ENCODE measurements at regions of chr2 and their contacts with region 1.

Region 1: DNA sequence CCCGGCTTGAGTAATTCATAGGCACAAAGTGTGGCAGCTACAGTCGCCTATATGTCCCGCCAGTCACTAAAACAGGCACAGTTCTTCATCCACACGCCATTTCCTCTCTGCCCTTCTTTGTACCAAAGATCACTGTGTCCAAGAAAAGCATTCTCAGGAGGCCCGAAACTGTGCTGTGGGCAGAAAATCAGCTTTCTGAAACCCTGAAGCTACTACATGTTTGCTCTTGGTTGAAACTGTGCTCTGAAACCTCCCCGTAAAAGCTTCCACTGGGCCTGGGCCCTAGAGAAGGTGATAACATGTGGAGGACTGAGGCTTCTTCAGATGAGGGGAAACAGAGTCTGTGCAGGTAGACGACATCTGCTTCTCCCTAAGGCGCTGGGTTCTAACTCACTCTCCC is 75.6 kb upstream of the ID2 start:
- DNase-seq: no peak
- H3K4me3 Mint-ChIP-seq: no peak overlapping the region
- H3K27ac Mint-ChIP-seq: peak overlapping the region; percentile 53
- H3K4me1 Mint-ChIP-seq: peaks cover 55% of the 10 kb centered on the region
- H3K27me3 Mint-ChIP-seq: peaks cover 7% of the 10 kb centered on the region

Region 2: DNA sequence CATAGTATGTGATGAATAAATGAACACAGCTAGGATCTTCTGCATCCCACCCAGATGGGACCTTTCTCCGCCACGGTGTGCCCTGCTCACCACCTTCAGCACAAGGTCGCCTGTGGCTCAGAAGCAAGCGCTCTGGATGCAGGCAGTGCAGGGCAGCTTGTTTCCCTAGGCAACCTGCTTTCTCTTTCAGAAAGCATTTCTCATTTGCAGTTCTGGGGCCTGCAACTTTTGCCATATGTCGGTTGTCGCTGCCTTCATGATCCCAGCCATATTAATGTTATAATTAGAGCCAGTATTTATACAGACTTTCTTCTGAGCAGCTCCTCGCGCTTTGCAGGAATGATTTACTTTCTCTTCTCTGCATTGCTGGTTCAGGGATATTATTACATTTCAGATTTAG is 996.3 kb before region 1 on chr2:
- intact Hi-C with region 1: no loop called
- DNase-seq: no peak
- H3K4me3 Mint-ChIP-seq: no peak overlapping the region
- H3K27ac Mint-ChIP-seq: peak overlapping the region; percentile 37
- H3K4me1 Mint-ChIP-seq: peaks cover 47% of the 10 kb centered on the region
- H3K27me3 Mint-ChIP-seq: no peaks in the 10 kb centered on the region

Region 3: GRCh38 chr2:8049851-8050571 is 556.2 kb before region 1 on chr2:
- intact Hi-C with region 1: loop called (anchors 2 kb)
- DNase-seq: peak; percentile 63
- H3K4me3 Mint-ChIP-seq: peak overlapping the region; percentile 30
- H3K27ac Mint-ChIP-seq: peak overlapping the region; percentile 86
- H3K4me1 Mint-ChIP-seq: peaks cover 53% of the 10 kb centered on the region
- H3K27me3 Mint-ChIP-seq: no peaks in the 10 kb centered on the region

Region 4: DNA sequence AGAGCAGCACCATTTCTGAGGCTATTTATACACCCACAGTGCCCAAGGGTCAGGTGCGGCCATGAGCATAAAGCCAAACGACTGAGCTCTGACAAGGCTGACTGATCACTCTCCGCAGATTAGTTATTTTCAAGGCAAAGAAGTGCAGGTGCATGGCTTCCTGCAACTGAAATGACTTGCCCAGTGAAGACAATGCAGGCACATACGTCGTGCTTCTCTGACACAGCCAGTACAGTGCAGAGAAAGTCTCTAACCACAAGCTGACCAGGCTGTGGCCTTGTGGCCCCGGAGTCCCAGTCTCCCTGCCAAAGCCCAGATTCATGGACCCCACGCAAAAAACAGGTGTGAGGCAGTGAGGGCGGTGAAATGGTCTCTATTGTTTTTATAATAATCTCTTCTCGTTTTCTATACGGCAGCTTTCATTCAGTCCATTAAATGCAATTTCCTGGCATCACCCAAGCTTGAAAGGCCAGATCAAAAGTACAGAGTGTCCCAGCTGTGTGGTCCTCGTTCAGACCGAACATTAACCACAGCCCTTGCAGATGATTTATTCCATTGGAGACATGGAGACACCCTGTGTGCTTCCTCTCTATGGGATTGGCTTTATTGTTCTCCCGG is 371.4 kb before region 1 on chr2:
- intact Hi-C with region 1: loop called (anchors 10 kb)
- DNase-seq: no peak
- H3K4me3 Mint-ChIP-seq: no peak overlapping the region
- H3K27ac Mint-ChIP-seq: no peak overlapping the region
- H3K4me1 Mint-ChIP-seq: peaks cover 34% of the 10 kb centered on the region
- H3K27me3 Mint-ChIP-seq: peaks cover 4% of the 10 kb centered on the region

Region 5: DNA sequence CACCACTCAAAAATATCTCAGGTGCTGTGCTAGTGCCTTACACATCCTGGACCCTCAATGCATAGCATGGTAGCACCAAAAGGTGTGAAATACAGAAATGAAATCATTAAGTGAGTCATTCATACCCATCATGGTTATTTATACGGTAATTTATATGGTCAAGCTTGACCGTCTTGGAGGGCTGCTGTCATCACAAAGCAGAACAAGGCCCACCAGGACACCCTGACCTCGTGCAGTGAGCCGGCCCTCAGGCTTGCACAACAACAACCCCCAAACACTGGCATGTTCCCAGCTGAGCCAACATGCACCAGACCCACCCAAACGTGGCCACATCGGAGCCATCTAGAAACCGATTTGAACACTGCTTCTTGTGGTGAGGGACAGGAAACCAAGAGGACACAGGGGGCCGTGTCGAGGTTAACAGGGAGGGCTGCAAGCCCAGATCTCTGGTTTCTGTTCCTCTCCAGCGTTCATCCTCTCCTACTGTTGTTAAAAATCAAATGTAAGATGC is 302.8 kb before region 1 on chr2:
- intact Hi-C with region 1: loop called (anchors 5 kb)
- DNase-seq: peak; percentile 82
- H3K4me3 Mint-ChIP-seq: peak overlapping the region; percentile 49
- H3K27ac Mint-ChIP-seq: peak overlapping the region; percentile 47
- H3K4me1 Mint-ChIP-seq: peaks cover 81% of the 10 kb centered on the region
- H3K27me3 Mint-ChIP-seq: no peaks in the 10 kb centered on the region

Region 6: GRCh38 chr2:8488001-8488738 is 118.1 kb before region 1 on chr2:
- intact Hi-C with region 1: loop called (anchors 5 kb)
- DNase-seq: no peak
- H3K4me3 Mint-ChIP-seq: peak overlapping the region; percentile 6
- H3K27ac Mint-ChIP-seq: peak overlapping the region; percentile 2
- H3K4me1 Mint-ChIP-seq: peaks cover 40% of the 10 kb centered on the region
- H3K27me3 Mint-ChIP-seq: peaks cover 6% of the 10 kb centered on the region

Region 7: DNA sequence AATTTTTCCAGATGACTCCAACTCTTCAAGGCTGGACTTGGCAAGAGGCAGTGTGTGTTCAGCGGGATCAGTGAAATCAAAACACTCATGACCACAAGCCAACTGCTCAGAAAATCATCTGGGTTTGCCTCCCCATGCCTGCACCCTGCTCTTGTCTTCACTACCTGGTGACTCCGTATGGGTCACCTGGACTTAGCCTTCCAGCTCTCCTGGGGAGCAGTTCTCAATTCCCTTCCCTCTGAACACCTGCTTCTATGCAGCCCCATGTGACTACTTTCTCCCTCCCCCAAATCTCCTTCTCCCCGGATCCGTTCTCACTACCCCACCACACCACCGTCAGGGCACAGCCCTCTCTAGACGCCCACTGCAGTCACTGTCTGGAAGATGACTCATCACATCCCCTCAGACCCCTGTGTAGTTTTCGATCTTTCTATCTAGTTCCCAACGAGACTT is 54.6 kb before region 1 on chr2:
- intact Hi-C with region 1: no loop called
- DNase-seq: no peak
- H3K4me3 Mint-ChIP-seq: no peak overlapping the region
- H3K27ac Mint-ChIP-seq: no peak overlapping the region
- H3K4me1 Mint-ChIP-seq: peaks cover 27% of the 10 kb centered on the region
- H3K27me3 Mint-ChIP-seq: no peaks in the 10 kb centered on the region

Region 8: DNA sequence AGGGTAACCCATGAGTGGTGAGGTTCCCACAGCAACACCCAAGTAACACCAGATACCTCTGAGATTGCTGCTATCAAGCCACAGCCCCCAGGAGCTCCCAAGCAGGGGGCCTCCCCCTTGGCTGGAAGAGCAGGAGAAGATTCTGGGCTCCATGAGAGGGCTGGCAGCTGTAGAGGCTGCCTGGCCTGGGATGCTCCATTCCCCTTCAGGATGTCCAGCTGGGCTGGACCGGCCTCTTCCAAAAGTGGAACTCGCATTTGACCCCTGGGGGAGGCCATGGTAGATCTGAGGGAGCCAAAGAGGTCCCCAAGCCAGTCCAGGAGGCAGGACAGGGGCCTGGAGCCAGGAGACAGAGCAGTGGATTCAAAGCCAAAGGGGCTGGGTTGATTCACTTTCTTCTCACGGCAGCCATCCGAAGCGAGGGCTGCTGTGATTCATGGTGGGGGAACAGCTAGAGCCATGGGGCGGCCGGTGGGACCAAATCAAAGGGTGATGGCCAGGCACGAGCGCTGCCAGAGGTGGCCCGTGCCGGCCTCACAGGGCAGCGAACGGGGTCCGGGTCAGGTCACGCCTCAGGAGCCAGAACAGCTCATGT is 19.7 kb before region 1 on chr2:
- intact Hi-C with region 1: loop called (anchors 1 kb)
- DNase-seq: no peak
- H3K4me3 Mint-ChIP-seq: peak overlapping the region; percentile 26
- H3K27ac Mint-ChIP-seq: peak overlapping the region; percentile 57
- H3K4me1 Mint-ChIP-seq: peaks cover 52% of the 10 kb centered on the region
- H3K27me3 Mint-ChIP-seq: peaks cover 16% of the 10 kb centered on the region

Region 9: DNA sequence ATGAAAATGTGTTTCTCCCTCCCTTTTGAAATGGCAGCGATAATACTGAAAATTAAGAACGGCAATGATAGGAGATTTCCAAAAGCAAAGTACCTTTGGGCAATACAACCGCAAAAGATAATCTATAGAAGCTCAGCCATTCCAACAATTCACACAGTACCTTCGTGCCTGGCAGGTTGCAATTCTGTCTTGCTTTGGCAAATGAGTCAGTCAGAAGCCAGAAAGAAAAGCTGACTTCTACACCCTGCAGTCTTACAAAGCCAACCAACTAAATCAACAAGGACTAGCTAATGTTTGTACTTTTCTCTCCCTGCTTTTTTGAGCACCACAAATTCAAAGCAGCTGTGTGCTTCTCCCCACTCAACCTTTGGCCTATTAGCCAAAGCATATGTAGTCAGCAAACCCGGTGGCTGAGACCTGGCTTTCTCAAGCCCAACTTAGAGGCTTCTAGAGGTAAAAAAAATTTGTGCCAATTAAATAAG is 50.0 kb after region 1 on chr2:
- intact Hi-C with region 1: loop called (anchors 5 kb)
- DNase-seq: no peak
- H3K4me3 Mint-ChIP-seq: no peak overlapping the region
- H3K27ac Mint-ChIP-seq: no peak overlapping the region
- H3K4me1 Mint-ChIP-seq: peaks cover 15% of the 10 kb centered on the region
- H3K27me3 Mint-ChIP-seq: peaks cover 22% of the 10 kb centered on the region

Measured in activated T-helper 2 cell treated with anti-CD3 and anti-CD28 coated beads, Interferon-gamma antibody, Interleukin-2, Interleukin-4, amounts not matched to agents 10 μg/mL and 5 μg/mL and 100 μg/mL, durations not matched to agents 14 hours and 24 hours and 36 hours (primary cell).